Activated CD4-positive, alpha-beta memory T cell treated with anti-CD3 and anti-CD28 coated beads for 36 hours (primary cell): ENCODE measurements at regions of chr18 and their contacts with region 1.

Region 1: DNA sequence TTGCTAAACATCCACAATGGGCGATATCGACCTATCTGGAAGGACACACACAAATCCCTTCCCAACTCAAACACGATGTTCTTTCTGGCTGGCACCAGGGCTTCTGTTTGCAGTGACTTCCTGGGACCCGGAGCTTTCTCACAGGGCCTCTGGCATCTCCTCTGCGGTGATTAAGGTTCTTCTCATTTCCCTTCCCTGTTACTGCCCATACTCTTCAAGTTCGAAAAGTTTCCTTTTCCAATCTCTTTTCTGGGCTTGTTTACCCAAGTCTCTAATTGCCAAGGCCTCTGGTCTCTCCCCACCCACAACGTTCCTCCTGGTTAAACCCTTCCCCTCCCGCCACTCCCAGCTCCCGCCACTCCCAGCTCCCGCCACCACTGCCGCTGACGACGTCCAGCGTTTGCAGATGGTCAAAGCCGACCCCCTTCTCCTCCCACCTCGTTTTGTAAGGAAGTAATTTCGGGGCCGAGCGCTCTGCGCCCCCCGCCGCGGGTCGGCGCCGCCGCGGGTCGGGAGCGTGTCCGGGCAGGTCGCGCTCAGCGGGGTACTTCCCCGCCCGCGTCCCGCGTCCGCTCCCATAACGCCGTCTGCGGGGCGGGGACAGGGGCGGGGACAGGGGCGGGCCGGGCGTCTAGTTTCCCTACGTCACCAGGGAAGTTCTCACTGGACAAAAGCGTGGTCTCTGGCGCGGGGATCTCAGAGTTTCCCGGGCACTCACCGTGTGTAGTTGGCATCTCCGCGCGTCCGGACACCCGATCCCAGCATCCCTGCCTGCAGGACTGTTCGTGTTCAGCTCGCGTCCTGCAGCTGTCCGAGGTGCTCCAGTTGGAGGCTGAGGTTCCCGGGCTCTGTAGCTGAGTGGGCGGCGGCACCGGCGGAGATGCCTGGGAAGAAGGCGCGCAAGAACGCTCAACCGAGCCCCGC is at the start of gene PMAIP1:
- DNase-seq: peak; percentile 94
- H3K4me3 Mint-ChIP-seq: peak within 1 kb of the TSS; percentile 96
- H3K27ac Mint-ChIP-seq: peak within 1 kb of the TSS; percentile 99
- H3K4me1 Mint-ChIP-seq: peaks cover 31% of the 10 kb centered on the region
- H3K27me3 Mint-ChIP-seq: no peaks in the 10 kb centered on the region
- total RNA-seq, gene PMAIP1: 97.6 to 104 TPM

Region 2: GRCh38 chr18:59139371-59140298 is 759.9 kb before region 1 on chr18 and contains the start of gene SEC11C:
- CTCF ChIA-PET with region 1: no interaction called
- POLR2A ChIA-PET with region 1: interaction called, 7 read pairs
- intact Hi-C with region 1: loop called (anchors 1 kb)
- DNase-seq: peak; percentile 97
- H3K4me3 Mint-ChIP-seq: peak within 1 kb of the TSS; percentile 94
- H3K27ac Mint-ChIP-seq: peak within 1 kb of the TSS; percentile 98
- H3K4me1 Mint-ChIP-seq: peaks cover 38% of the 10 kb centered on the region
- H3K27me3 Mint-ChIP-seq: peaks cover 6% of the 10 kb centered on the region
- total RNA-seq, gene SEC11C: 119 to 130 TPM

Region 3: DNA sequence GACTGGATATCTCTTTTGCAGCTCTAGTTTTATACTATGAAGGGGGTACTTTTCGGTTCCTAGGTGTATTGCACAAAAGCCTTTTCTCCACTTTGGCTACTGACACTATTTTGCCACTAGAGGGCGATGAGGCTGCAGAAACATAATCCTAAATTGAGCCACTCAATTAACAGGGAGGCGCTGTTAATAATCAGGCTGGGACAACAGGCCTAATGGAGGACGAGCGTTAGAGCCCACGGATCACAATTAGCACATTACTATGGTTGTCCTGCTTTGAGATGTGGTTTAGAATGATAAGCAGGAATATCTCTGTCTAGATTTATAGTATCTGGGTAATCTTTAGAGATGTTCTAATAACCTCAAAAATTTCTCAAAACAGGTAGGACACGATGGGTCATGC is 62.0 kb before region 1 on chr18:
- CTCF ChIA-PET with region 1: interaction called, 14 read pairs
- POLR2A ChIA-PET with region 1: interaction called, 7 read pairs
- intact Hi-C with region 1: loop called (anchors 1 kb)
- DNase-seq: peak; percentile 53
- H3K4me3 Mint-ChIP-seq: no peak overlapping the region
- H3K27ac Mint-ChIP-seq: no peak overlapping the region
- H3K4me1 Mint-ChIP-seq: peaks cover 10% of the 10 kb centered on the region
- H3K27me3 Mint-ChIP-seq: peaks cover 2% of the 10 kb centered on the region

Region 4: GRCh38 chr18:59885579-59886163 is 13.9 kb before region 1 on chr18:
- CTCF ChIA-PET with region 1: interaction called, 14 read pairs
- POLR2A ChIA-PET with region 1: interaction called, 93 read pairs
- intact Hi-C with region 1: loop called (anchors 1 kb)
- DNase-seq: peak; percentile 46
- H3K4me3 Mint-ChIP-seq: peak overlapping the region; percentile 27
- H3K27ac Mint-ChIP-seq: peak overlapping the region; percentile 63
- H3K4me1 Mint-ChIP-seq: peaks cover 37% of the 10 kb centered on the region
- H3K27me3 Mint-ChIP-seq: no peaks in the 10 kb centered on the region

Region 5: DNA sequence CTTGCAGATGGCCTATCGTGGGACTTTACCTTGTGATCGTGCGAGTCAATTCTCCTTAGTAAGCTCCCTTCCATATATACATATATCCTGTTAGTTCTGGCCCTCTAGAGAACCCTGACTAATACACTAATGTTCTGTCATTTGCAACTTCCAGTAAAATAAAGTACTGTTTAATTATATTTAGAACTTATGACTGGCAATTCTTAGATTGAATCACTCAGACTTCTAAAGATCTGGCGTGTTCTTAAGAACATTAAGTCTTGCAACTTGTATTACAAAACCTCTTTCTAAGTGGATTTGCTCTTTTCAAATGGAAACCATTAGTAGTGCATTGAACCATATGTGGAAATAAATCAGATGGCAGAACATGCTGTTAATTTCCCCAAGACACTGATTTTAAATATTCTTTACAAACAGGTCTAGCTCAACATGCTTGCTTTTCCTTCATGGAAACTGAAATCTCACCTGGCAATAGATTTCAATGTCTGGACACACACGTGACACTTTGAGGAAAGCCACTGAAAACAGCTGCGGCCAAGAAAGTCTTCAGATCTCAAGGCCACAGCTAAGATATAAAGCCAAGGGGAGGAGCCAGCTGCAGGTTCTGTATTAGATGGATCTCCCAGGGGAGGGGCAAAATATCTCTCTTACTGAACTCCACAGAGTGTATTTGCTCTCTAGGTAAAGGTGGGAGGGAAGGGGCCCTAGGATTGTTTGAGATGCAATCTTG is 50.8 kb after region 1 on chr18:
- CTCF ChIA-PET with region 1: interaction called, 10 read pairs
- POLR2A ChIA-PET with region 1: interaction called, 65 read pairs
- intact Hi-C with region 1: loop called (anchors 1 kb)
- DNase-seq: peak; percentile 35
- H3K4me3 Mint-ChIP-seq: no peak overlapping the region
- H3K27ac Mint-ChIP-seq: peak overlapping the region; percentile 68
- H3K4me1 Mint-ChIP-seq: peaks cover 49% of the 10 kb centered on the region
- H3K27me3 Mint-ChIP-seq: no peaks in the 10 kb centered on the region